A673 (cell line): ENCODE measurements at regions of chr19 and their contacts with region 1.

Region 1: DNA sequence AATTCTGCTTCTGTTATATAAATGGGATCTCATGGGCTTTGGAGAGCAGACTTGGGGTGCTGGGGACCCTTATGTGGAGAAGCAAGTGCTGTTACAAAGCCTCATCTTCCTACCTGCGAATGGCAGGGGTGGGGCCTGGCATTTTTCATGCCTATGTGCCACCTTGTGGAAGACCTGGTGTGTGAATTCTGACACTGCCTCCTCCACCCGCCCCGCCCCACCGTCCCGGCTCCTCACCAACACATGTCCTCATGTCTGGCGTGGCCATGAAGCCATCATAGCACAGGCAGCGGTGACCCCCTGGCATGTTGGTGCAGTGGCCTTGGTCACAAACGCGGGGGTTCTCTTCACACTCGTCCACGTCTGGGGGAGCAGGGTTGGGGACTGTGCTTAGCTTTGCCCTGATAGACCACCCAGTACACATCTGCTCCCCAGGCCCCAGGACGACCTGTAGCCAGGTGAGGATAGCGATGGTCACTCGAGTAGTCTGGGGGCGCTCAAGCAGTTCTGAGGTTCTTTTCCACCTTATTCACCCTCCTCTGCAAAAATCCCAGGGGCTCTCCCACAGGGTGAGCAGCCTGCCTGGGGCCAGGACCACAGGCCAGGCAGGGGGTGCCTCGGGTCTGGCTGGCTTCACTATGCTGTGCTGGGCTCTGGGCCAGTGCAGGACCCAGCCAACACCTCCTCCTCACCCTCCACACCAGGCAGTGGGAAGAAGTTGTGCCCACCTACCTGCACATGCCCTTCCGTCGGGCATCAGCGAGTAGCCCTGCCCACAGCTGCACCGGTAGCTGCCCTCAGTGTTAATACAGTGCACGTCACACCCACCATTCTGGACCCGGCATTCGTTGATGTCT is 32.7 kb downstream of the FBN3 start:
- DNase-seq: no peak
- H3K4me3 ChIP-seq: no peak overlapping the region
- H3K27ac ChIP-seq: no peak overlapping the region
- H3K4me1 ChIP-seq: no peaks in the 10 kb centered on the region
- H3K27me3 ChIP-seq: no peaks in the 10 kb centered on the region
- CTCF ChIP-seq: no peak

Region 2: DNA sequence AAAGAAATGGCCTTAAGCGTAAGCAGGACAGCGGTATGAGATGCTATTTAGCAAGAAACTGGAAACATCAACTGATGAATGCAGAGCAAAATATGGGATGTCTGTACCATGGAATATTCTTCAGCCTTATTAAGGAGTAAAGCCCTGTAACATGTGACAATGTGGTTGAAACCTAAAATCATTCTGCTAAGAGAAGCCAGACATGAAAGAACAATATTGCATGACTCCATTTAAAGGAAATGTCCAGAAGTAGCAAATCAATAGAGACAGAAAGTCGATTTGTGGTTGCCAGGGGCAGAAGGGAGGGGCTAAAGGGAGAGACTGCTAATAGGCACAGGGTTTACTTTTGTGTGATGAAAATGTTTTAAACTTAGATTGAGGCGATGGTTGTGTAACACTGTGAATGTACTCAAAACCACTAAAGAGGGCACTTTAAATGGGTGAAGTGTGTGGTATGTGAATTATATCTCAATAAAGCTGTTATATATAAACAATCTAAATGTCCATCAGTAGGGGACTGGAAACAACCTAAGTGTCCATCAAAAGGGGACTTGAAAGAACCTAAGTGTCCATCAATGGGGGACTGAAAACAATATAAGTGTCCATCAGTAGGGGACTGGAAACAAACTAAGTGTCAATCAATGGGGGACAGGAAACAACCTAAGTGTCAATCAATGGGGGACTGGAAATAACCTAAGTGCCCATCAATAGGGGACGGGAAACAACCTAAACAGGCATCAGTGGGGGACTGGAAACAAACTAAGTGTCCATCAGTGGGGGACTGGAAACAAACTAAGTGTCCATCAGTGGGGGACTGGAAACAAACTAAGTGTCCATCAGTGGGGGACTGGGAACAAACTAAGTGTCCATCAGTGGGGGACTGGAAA is 18.7 kb before region 1 on chr19:
- CTCF ChIA-PET with region 1: no interaction called
- POLR2A ChIA-PET with region 1: no interaction called
- intact Hi-C with region 1: no loop called
- DNase-seq: no peak
- H3K4me3 ChIP-seq: no peak overlapping the region
- H3K27ac ChIP-seq: no peak overlapping the region
- H3K4me1 ChIP-seq: no peaks in the 10 kb centered on the region
- H3K27me3 ChIP-seq: no peaks in the 10 kb centered on the region
- CTCF ChIP-seq: no peak

Region 3: GRCh38 chr19:8132858-8133458 is 16.3 kb after region 1 on chr19:
- CTCF ChIA-PET with region 1: no interaction called
- POLR2A ChIA-PET with region 1: no interaction called
- intact Hi-C with region 1: no loop called
- DNase-seq: no peak
- H3K4me3 ChIP-seq: no peak overlapping the region
- H3K27ac ChIP-seq: no peak overlapping the region
- H3K4me1 ChIP-seq: no peaks in the 10 kb centered on the region
- H3K27me3 ChIP-seq: no peaks in the 10 kb centered on the region
- CTCF ChIP-seq: no peak

Region 4: GRCh38 chr19:8595651-8596050 is 479.0 kb after region 1 on chr19:
- CTCF ChIA-PET with region 1: interaction called, 12 read pairs
- POLR2A ChIA-PET with region 1: no interaction called
- intact Hi-C with region 1: no loop called
- DNase-seq: no peak
- H3K4me3 ChIP-seq: no peak overlapping the region
- H3K27ac ChIP-seq: no peak overlapping the region
- H3K4me1 ChIP-seq: peaks cover 5% of the 10 kb centered on the region
- H3K27me3 ChIP-seq: no peaks in the 10 kb centered on the region
- CTCF ChIP-seq: no peak